ENCODE measurements at regions of chr18 and their contacts with region 1.

Region 1: DNA sequence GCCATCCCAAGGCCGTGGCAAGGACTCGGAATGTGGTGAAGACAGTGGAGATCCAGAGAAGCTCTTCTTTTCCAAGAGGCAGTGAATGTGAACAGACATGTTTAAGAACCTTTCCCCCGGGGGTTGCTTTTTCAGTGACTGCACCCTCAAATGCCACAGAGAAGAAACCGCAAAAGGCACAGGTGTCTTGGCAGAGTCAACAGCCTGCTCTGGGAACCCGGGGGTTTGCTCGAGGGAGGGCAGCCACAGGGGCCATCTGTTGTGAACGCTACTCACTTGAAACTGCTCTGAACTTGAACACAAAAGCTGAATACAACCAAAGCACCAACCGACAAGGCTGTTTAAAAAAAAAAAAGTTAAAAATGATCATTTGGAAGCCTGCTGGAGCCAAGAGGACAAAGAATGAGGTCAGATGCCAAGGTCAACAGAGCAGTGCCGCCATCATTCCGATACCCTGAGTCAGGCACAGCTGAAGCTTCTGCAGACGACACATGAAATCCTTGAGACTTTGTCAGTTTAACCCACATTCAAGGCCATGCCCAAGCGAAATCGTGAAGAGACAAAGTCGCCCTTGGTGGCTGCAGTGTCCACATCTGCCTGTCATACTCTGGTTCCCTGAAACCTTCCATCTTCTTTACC is 47.4 kb downstream of the PSMG2 start:
- DNase-seq: no peak
- H3K4me3 ChIP-seq: no peak overlapping the region
- H3K27me3 ChIP-seq: no peaks in the 10 kb centered on the region
- CTCF ChIP-seq: no peak

Region 2: GRCh38 chr18:12890506-12890905 is 140.3 kb after region 1 on chr18:
- CTCF ChIA-PET with region 1: interaction called, 55 read pairs
- POLR2A ChIA-PET with region 1: interaction called, 4 read pairs
- DNase-seq: no peak
- H3K4me3 ChIP-seq: no peak overlapping the region
- H3K27me3 ChIP-seq: no peaks in the 10 kb centered on the region
- CTCF ChIP-seq: peak; percentile 22; the same call in 1 of the 2 replicates

Measured in BJ (cell line).